HAP-1 (cell line): ENCODE measurements at regions of chr5 and their contacts with region 1.

Region 1: GRCh38 chr5:149561848-149562247 is 10.6 kb upstream of the CSNK1A1 start:
- DNase-seq: no peak
- H3K4me3 ChIP-seq: no peak overlapping the region
- H3K4me1 ChIP-seq: peaks cover 23% of the 10 kb centered on the region
- H3K27me3 ChIP-seq: no peaks in the 10 kb centered on the region

Region 2: GRCh38 chr5:149371296-149371962 is 190.4 kb before region 1 on chr5:
- in situ Hi-C with region 1: loop called (anchors 10 kb)
- DNase-seq: peak; percentile 47 to 81
- H3K4me3 ChIP-seq: no peak overlapping the region
- H3K4me1 ChIP-seq: no peaks in the 10 kb centered on the region
- H3K27me3 ChIP-seq: no peaks in the 10 kb centered on the region

Region 3: DNA sequence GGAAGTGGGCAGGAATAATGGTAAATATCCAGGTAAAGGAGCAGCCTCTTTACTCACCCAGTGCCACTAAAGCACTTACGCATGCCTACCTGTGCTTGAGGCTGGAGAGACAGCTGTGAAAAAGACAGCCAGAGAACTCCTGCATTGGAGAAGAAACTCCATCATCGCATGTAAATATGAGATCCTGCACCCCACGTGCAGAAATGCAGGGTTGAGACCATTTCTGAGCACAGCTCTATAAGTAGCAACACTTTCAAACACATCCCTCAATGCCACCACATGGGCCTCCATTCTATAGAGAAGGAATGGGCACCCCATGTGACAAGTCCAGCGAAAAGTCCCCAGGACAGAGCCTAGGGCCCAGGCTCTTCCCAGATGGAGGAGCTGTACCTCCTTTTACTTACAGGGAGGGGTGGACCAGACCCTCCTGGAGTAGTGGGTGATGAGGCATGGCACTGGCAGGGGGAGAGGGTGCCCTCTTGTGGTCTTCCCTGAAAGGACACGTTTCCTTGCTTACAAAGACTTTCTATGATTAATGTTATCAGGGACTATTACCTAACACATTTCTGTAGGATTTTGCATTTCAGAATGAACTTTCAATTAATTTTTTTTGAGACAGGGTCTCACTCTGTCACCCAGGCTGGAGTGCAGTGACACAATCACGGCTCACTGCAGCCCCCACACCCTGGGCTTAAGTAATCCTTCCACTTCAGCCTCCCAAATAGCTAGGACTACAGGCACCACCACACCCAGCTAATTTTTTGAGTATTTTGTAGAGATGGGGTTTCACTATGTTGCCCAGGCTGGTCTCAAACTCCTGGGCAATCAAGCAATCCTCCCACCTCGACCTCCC is 127.5 kb before region 1 on chr5:
- in situ Hi-C with region 1: loop called (anchors 5 kb)
- DNase-seq: peak; percentile 63 to 81
- H3K4me3 ChIP-seq: no peak overlapping the region
- H3K4me1 ChIP-seq: peaks cover 13% of the 10 kb centered on the region
- H3K27me3 ChIP-seq: no peaks in the 10 kb centered on the region